GM12878 (cell line): ENCODE measurements at regions of chr3 and their contacts with region 1.

Region 1: GRCh38 chr3:143535994-143536784 is 312.1 kb downstream of the SLC9A9 start:
- DNase-seq: peak; percentile 43
- ATAC-seq: peak; percentile 94
- H3K4me3 ChIP-seq: peak overlapping the region; percentile 41; the same call in 1 of the 2 replicates
- H3K27ac ChIP-seq: peak overlapping the region; percentile 45
- H3K4me1 ChIP-seq: peaks cover 29% of the 10 kb centered on the region
- H3K27me3 ChIP-seq: no peaks in the 10 kb centered on the region
- CTCF ChIP-seq: no peak
- EP300 ChIP-seq: peak; percentile 56 to 76; a peak in 3 of 4 replicates
- POLR2A ChIP-seq: no peak
- RAD21 ChIP-seq: no peak

Region 2: GRCh38 chr3:143433787-143434378 is 102.3 kb before region 1 on chr3:
- CTCF ChIA-PET with region 1: no interaction called
- POLR2A ChIA-PET with region 1: no interaction called
- RAD21 ChIA-PET with region 1: no interaction called
- SMC1A ChIA-PET with region 1: interaction called, 3 read pairs
- in situ Hi-C with region 1: no loop called
- intact Hi-C with region 1: loop called (anchors 5 kb)
- DNase-seq: no peak
- ATAC-seq: peak; percentile 70
- H3K4me3 ChIP-seq: no peak overlapping the region
- H3K27ac ChIP-seq: no peak overlapping the region
- H3K4me1 ChIP-seq: no peaks in the 10 kb centered on the region
- H3K27me3 ChIP-seq: no peaks in the 10 kb centered on the region
- CTCF ChIP-seq: peak; percentile 61 to 67 (median 63); a peak in 5 of 6 replicates
- EP300 ChIP-seq: no peak
- POLR2A ChIP-seq: no peak
- RAD21 ChIP-seq: peak; percentile 72